Heart right ventricle (tissue), 16 donors: ENCODE measurements at regions of chr1 and their contacts with region 1.

Region 1: DNA sequence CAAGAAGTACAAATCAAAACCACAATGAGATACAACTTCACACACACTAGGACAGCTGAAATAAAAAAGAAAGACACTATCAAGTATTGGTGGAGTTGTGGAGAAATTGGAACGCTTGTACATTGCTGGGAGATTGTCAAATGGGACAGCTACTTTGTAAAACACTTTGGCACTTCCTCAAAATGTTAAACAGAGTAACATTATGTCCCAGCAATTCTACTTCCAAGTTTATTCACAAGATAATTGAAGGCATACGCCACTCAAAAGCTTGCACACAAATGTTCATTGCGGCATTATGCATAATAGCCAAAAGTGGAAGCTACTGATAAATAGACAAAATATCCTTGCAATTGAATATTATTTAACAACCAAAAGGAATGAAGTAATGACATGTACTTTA is 199.9 kb upstream of the KCNK2 start:
- DNase-seq: no peak
- ATAC-seq: no peak
- H3K4me3 ChIP-seq: no peak overlapping the region
- H3K27ac ChIP-seq: no peak overlapping the region
- H3K4me1 ChIP-seq: no peaks in the 10 kb centered on the region
- H3K27me3 ChIP-seq: no peaks in the 10 kb centered on the region
- CTCF ChIP-seq: no peak

Region 2: DNA sequence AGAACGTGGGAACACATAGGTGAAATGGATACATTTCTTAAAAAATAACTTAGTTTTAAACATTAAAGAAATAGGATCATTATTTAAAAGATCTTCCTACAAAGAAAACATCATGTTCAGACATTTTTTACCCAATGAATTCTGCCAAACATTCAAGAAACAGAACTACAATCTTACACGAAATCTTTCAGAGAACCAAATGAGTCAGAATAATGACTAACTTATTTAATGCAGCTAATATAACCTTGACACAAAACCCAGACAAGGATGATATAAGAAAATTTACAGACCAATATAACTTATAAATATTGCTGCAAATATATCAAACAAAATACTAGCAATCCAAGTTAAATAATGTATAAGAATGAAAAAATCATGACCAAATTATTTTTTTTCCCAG is 20.2 kb before region 1 on chr1:
- intact Hi-C with region 1: loop called in 1 of 10 experiments (anchors 2 kb)
- DNase-seq: no peak
- ATAC-seq: no peak
- H3K4me3 ChIP-seq: no peak overlapping the region
- H3K27ac ChIP-seq: no peak overlapping the region
- H3K4me1 ChIP-seq: no peaks in the 10 kb centered on the region
- H3K27me3 ChIP-seq: peaks cover 0 to 7% (median 4%) of the 10 kb centered on the region in 7 donors
- CTCF ChIP-seq: no peak

Region 3: DNA sequence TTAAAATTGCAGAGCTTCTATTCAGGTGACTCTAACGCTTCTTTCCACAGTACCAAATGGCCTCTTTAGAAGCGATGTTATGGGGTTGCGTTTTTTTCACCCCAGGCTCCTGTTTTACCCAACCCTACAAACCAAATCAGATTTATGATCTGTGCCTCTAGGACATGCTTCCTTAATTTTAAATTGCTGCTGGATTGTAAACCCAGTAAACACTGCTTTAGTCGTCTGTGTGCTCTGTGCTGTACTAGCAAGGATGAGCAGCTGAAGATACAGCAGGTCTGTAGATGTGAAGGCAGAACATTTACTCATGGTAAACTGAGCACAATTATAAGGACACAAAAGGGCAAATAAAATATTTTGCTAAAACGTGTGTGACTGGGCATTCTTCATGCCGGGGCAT is 212.9 kb after region 1 on chr1:
- intact Hi-C with region 1: no loop called
- DNase-seq: no peak
- ATAC-seq: no peak
- H3K4me3 ChIP-seq: no peak overlapping the region
- H3K27ac ChIP-seq: no peak overlapping the region
- H3K4me1 ChIP-seq: no peaks in the 10 kb centered on the region
- H3K27me3 ChIP-seq: peaks cover 0 to 21% (median 0%) of the 10 kb centered on the region in 7 donors
- CTCF ChIP-seq: no peak